GM10248 (cell line): ENCODE measurements at regions of chr12 and their contacts with region 1.

Region 1: GRCh38 chr12:31728917-31729640 is at the start of gene AMN1:
- DNase-seq: peak; percentile 97
- CTCF ChIP-seq: no peak

Region 2: DNA sequence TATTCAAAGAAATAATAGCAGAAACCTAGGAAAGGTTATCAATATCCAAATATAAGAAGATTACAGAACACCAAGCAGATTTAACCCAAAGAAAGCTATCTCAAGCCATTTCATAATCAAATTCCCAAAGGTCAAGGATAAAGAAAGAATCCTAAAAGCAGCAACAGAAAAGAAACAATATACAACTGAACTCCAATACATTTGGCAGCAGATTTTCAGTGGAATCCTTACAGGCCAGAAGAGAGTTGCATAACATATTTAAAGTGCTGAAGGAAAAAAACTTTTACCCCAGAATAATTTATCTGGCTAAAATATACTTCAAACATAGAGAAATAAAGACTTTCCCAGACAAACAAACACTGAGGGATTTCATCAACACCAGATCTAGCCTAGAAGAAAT is 192.4 kb before region 1 on chr12:
- CTCF ChIA-PET with region 1: no interaction called
- POLR2A ChIA-PET with region 1: no interaction called
- DNase-seq: no peak
- CTCF ChIP-seq: no peak

Region 3: GRCh38 chr12:31578632-31579031 is 150.4 kb before region 1 on chr12:
- CTCF ChIA-PET with region 1: no interaction called
- POLR2A ChIA-PET with region 1: interaction called, 10 read pairs
- DNase-seq: no peak
- CTCF ChIP-seq: no peak

Region 4: DNA sequence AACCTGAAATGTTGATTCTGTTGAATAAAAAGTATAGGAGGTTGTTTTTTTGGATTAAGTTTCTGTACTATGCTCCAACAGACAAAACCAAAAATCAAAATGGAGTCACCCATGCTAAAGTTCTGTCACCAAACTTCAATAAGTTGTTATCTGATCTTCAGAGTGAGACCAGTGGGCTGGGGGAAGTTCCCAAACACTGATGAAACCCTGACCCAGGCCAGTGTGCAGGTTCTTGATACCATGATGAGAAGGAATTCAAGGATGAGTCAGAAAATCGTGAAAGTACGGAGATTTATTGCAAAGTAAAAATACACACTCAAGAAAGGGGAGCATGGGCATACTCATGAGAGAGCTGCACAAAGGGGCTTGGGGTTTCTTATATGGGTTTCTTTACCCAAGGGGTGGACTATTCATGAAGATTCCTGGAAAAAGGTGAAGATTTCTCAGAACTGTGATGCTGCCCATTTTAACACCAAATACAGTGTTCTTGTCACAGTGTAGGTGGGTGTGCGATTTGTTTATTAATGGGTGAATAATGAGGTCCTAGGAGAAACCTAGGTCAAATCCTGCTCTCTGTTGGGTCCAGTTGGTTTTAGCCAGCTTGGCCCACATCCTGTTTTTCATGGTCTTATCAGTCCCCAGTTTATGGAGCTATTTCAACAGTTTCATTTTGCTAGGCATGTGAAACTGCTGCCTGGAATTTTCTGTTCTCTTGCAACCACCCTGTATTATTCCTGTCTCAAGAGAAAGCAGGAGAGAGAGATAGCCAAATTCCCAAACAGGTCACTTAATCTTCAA is 110.7 kb before region 1 on chr12:
- CTCF ChIA-PET with region 1: no interaction called
- POLR2A ChIA-PET with region 1: no interaction called
- DNase-seq: no peak
- CTCF ChIP-seq: no peak

Region 5: DNA sequence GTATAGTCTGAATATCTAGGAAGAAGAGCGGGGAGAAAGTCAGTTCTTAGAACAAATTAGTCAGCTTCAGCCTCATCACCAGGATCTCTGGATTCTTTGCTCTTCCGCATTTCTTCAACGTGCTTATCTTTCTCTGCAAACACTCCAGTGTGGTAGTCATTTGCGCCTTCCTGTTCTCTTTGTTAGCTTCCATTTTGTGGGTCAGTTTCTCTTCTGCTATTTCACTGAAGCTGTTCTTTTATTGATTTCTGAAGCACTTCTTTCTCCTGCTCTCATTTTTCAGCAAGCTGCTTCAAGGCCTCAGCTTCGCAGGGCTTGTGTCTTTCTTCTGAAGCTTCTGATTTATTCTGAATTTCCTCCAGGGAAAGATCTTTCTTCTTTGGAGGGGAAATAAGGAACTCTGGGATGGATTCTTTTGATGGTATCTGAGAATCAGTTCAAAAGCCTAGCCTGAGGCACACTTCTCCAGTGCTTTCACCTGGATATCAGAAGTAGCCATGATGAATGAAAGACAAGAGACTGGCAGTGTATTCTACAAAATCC is 13.7 kb before region 1 on chr12:
- CTCF ChIA-PET with region 1: interaction called, 14 read pairs
- POLR2A ChIA-PET with region 1: interaction called, 7 read pairs
- DNase-seq: peak; percentile 49
- CTCF ChIP-seq: no peak